AG04449 (cell line): ENCODE measurements at regions of chr16 and their contacts with region 1.

Region 1: GRCh38 chr16:67561824-67562525 is 351 bp upstream of the CTCF start:
- DNase-seq: no peak
- H3K4me3 ChIP-seq: peak overlapping the region; percentile 83
- CTCF ChIP-seq: no peak

Region 2: GRCh38 chr16:67530013-67530939 is 31.7 kb before region 1 on chr16:
- CTCF ChIA-PET with region 1: interaction called, 14 read pairs
- POLR2A ChIA-PET with region 1: interaction called, 3 read pairs
- DNase-seq: no peak
- H3K4me3 ChIP-seq: peak overlapping the region; percentile 73
- CTCF ChIP-seq: no peak

Region 3: DNA sequence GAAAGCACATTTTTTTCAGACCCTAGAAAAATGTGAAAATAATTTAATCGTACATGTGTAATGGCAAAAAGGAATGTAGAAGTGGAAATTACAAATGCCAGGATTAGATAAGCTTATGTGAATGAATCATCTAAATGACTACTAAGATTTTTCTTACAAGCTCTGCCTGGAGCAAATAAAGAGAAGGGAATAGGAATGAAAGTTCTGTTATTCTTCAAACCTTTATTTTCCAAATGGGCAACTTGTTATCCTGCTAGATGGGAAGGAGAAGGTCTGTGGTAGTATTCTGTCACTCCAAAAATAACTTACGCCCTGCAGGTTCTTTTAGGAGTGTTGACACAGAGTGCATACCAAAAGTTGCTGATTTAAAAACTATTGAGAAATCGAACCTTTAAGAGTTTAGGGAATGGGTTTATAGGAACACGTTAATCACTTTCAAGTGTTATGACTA is 10.0 kb after region 1 on chr16:
- CTCF ChIA-PET with region 1: interaction called, 27 read pairs
- POLR2A ChIA-PET with region 1: interaction called, 17 read pairs
- DNase-seq: no peak
- H3K4me3 ChIP-seq: no peak overlapping the region
- CTCF ChIP-seq: no peak

Region 4: DNA sequence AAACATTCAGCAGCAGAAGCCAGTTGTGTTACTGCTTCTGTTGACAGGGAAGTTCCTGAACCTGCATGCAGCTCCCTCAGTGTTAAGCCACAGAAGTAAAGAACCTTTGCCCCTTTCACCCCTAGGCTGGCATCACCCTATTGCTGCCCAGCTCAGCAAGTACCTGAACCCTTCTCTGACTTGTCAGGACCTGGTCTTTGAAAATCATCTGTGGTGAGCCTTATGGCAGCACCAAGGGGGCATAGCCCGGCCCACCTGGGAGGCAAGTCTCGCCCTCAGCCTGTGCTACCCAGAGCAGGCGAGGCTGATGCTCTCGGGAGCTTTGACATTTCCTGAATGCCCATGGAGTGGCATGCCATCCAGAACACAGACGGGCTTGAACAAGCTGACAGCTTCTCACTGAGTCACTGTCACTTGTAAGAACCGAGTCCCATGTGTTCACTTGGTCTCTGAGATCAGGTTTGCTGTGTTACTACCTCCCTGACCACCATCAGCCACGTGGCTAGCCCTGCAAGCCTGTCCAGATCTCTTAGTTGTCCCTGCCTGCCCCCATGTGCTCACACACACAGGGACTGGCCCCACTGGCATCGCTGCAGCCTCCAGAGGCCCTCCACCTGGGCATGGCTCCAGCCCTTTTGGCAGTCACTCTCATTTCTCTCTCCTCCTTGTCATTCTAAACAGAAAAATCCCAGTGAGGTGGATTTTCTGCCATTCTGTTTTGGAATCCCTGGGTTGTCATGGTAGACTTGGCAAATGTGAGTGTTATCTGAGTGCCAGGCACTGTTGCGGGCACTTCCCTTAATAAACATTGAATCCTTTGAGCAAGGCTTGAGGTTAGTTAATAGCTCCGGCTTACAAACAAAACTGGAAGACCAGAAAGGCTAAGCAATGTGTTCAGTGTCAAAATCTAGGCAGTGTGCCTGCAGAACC is 80.1 kb after region 1 on chr16:
- CTCF ChIA-PET with region 1: interaction called, 62 read pairs
- POLR2A ChIA-PET with region 1: interaction called, 3 read pairs
- DNase-seq: no peak
- H3K4me3 ChIP-seq: no peak overlapping the region
- CTCF ChIP-seq: no peak

Region 5: GRCh38 chr16:67667817-67668494 is 106.0 kb after region 1 on chr16:
- CTCF ChIA-PET with region 1: interaction called, 101 read pairs
- POLR2A ChIA-PET with region 1: interaction called, 14 read pairs
- DNase-seq: peak; percentile 54
- H3K4me3 ChIP-seq: peak overlapping the region; percentile 23; the same call in 1 of the 2 replicates
- CTCF ChIP-seq: peak; percentile 97

Region 6: GRCh38 chr16:67685388-67686112 is 123.6 kb after region 1 on chr16:
- CTCF ChIA-PET with region 1: no interaction called
- POLR2A ChIA-PET with region 1: no interaction called
- DNase-seq: no peak
- H3K4me3 ChIP-seq: no peak overlapping the region
- CTCF ChIP-seq: no peak